ENCODE measurements at regions of chr1 and their contacts with region 1.

Region 1: GRCh38 chr1:8586438-8586837 is 231.0 kb downstream of the RERE start:
- DNase-seq: no peak
- CTCF ChIP-seq: no peak

Region 2: DNA sequence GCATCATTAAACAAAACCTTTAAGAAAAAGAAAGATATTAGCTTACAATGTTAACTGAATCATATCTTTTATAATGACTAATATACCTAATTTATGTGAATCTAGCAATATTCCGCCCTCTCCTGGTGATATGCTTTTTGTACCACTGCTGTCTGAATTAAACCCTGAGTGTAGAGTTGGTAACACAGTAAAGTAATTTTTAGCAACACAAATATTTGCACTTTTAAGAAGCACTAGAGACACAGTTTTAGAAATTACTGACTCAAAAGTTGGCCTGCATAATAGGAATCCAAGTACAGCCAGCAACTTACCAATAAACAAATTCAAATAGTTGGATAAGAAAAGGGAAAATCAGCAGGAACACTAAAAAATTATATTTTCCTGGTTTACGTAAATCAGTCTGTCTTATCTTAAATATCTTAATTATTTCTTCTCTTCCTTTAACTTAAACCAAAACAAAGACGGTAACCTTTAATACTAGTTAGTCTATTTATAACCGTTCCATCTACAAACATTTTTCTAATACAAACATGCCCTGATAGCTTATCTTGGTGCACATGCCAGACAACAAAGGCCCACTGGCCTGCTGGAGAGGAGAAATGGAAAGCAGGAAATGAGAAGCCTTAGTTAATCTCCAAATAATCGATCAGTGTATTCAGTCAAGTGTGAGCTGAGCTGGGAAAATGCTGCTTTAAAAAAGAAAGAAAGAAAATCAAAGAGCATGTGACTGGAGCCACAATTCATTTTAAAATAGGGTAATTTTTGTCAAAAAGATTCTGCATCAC is 15.0 kb before region 1 on chr1:
- CTCF ChIA-PET with region 1: interaction called, 10 read pairs
- POLR2A ChIA-PET with region 1: no interaction called
- DNase-seq: no peak
- CTCF ChIP-seq: no peak

Region 3: GRCh38 chr1:8780405-8780804 is 194.0 kb after region 1 on chr1:
- CTCF ChIA-PET with region 1: no interaction called
- POLR2A ChIA-PET with region 1: no interaction called
- DNase-seq: no peak
- CTCF ChIP-seq: no peak

Region 4: DNA sequence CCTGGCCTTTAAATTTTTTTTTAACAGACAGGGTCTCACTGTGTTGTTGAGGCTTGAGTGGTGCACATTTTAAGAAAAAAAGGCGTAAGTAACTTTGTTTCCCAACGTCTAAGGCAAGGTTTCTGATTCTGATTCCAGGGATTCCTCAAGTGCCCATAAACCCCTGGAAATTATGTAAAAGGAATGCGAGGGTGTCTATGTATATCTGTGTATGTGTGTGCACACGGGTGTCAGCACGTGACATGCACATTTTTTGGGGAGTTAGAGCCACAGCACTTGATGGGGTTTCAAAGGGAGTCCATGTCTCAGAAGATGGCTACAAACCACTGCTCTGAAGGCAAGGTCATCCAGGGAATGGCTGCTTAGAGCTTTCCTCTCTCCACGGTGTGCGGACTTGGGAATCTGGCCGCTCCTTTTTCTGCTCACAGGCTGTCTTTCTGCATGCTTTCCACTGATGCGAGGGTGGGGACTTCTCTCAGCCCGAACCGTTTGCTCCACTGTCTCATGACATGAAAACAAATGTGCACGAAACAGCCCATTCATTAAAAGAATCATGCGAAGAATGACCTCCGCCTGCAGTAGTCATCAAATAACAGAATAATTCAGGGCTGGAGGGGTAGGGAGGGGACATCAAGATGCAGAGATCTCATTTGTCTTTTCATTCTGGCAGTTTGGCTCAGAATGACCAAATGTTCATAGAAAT is 249.7 kb after region 1 on chr1:
- CTCF ChIA-PET with region 1: no interaction called
- POLR2A ChIA-PET with region 1: no interaction called
- DNase-seq: no peak
- CTCF ChIP-seq: no peak